ENCODE measurements at regions of chr16 and their contacts with region 1.

Region 1: GRCh38 chr16:19086322-19087199 is 19.1 kb downstream of the COQ7 start:
- DNase-seq: peak; percentile 88 to 92 (median 91)
- H3K4me3 ChIP-seq: peak overlapping the region in 2 of 3 experiments; percentile 10 to 67
- H3K4me3 Mint-ChIP-seq: peak overlapping the region; percentile 75 to 87
- H3K27ac ChIP-seq: no peak overlapping the region
- H3K27ac Mint-ChIP-seq: peak overlapping the region; percentile 46 to 89 (median 77)
- H3K4me1 ChIP-seq: peaks cover 14% of the 10 kb centered on the region in 2 donors
- H3K4me1 Mint-ChIP-seq: peaks cover 13% of the 10 kb centered on the region
- H3K27me3 ChIP-seq: peaks cover 0 to 19% of the 10 kb centered on the region in 2 donors
- H3K27me3 Mint-ChIP-seq: peaks cover 14 to 18% (median 18%) of the 10 kb centered on the region in 3 donors
- CTCF ChIP-seq: peak; percentile 95

Region 2: GRCh38 chr16:19118938-19119431 is 32.4 kb after region 1 on chr16:
- intact Hi-C with region 1: no loop called
- DNase-seq: peak; percentile 82 to 92 (median 90)
- H3K4me3 ChIP-seq: peak overlapping the region; percentile 41 to 78 (median 53)
- H3K4me3 Mint-ChIP-seq: peak overlapping the region; percentile 77 to 90
- H3K27ac ChIP-seq: peak overlapping the region; percentile 81 to 94
- H3K27ac Mint-ChIP-seq: peak overlapping the region; percentile 90 to 98 (median 94)
- H3K4me1 ChIP-seq: peaks cover 64 to 72% of the 10 kb centered on the region in 2 donors
- H3K4me1 Mint-ChIP-seq: peaks cover 59% of the 10 kb centered on the region
- H3K27me3 ChIP-seq: no peaks in the 10 kb centered on the region
- H3K27me3 Mint-ChIP-seq: no peaks in the 10 kb centered on the region
- CTCF ChIP-seq: no peak

Region 3: GRCh38 chr16:19167710-19168370 is 81.3 kb after region 1 on chr16 and contains the start of gene SYT17:
- intact Hi-C with region 1: loop called in 1 of 2 experiments (anchors 5 kb)
- DNase-seq: peak; percentile 71 to 79 (median 76)
- H3K4me3 ChIP-seq: peak within 1 kb of the TSS; percentile 30 to 76 (median 46)
- H3K4me3 Mint-ChIP-seq: peak within 1 kb of the TSS; percentile 77 to 86
- H3K27ac ChIP-seq: no peak within 1 kb of the TSS
- H3K27ac Mint-ChIP-seq: no peak within 1 kb of the TSS
- H3K4me1 ChIP-seq: peaks cover 20 to 30% of the 10 kb centered on the region in 2 donors
- H3K4me1 Mint-ChIP-seq: peaks cover 19% of the 10 kb centered on the region
- H3K27me3 ChIP-seq: peaks cover 18 to 38% of the 10 kb centered on the region in 2 donors
- H3K27me3 Mint-ChIP-seq: peaks cover 36 to 50% (median 48%) of the 10 kb centered on the region in 3 donors
- CTCF ChIP-seq: peak; percentile 92
- polyA plus RNA-seq, gene SYT17: 0.81 to 4.9 (median 1.1) TPM

Region 4: DNA sequence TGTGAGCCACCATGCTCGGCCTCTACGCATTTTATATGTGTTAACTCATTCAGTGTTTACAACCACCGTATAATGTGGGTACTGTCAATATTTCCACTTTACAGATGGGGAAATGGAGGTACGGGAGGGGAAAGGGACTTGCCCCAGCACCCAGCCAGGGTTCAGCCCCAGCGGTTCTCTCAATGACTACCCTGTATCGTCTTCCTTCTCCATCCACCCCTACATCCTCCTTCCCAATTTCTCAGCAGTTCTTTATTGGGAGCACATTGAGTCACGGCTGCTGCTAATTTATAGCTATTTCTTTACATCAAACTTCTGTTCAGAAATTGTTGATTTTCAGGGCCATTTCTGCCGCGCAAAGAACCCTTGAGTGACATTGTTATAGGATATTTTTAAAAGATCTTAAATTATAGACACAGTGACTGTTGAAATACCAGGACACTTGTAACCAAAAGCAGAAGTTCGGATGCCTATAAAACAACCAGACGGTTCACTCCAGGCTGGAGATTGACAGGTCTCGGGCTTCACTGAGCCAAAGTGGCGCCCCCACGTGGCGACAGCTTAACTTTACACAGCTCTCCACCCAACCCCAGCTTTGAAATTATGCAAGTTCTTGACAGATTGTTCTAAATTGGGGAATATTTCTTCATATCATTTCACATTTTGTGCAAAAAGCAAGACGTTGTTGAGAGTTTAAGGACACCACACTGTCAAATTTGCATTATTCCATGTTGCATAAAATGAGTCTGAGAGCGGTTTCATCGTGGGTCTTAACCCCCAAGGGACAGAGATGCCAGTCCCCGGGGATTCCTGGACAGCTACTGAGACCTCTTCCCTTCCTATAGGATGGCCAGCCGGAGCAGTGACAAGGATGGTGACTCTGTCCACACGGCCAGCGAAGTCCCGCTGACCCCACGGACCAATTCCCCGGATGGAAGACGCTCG is 93.3 kb after region 1 on chr16:
- intact Hi-C with region 1: loop called in 1 of 2 experiments (anchors 5 kb)
- DNase-seq: peak; percentile 87 to 91 (median 90)
- H3K4me3 ChIP-seq: peak overlapping the region in 1 of 3 experiments; percentile 38
- H3K4me3 Mint-ChIP-seq: no peak overlapping the region
- H3K27ac ChIP-seq: peak overlapping the region; percentile 49 to 74
- H3K27ac Mint-ChIP-seq: peak overlapping the region; percentile 61 to 94 (median 89)
- H3K4me1 ChIP-seq: peaks cover 56% of the 10 kb centered on the region in 2 donors
- H3K4me1 Mint-ChIP-seq: peaks cover 52% of the 10 kb centered on the region
- H3K27me3 ChIP-seq: no peaks in the 10 kb centered on the region
- H3K27me3 Mint-ChIP-seq: peaks cover 0 to 5% (median 0%) of the 10 kb centered on the region in 3 donors
- CTCF ChIP-seq: peak; percentile 92

Region 5: DNA sequence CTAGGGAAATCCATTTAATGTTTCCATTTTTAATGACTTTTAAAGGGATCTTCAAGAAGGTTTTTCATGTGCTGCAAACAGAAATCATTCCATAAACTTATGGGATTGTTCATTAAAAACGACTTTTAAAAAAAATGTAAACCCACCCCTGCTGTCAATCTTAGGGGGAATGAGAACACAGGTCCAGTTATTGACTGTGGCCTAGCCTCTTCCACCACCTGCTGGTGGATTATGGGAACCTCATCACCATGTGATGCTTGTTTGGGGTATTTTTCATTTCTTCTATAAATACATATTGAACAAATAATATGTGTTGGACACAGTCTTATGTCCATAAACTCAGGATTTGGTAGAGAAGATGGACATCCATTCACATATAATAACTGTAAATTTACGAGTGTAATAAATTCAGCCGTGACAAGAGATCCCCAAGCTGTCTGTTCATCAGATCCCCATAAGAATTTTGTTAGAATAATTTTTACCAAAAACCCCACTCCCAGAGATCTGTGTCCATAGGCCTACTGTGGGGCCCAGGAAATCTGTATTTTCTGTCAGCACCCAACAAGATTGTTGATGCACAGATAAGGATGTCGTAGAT is 289.1 kb after region 1 on chr16:
- intact Hi-C with region 1: loop called (anchors 1 to 2 kb)
- DNase-seq: peak; percentile 32 to 55 (median 52)
- H3K4me3 ChIP-seq: no peak overlapping the region
- H3K4me3 Mint-ChIP-seq: no peak overlapping the region
- H3K27ac ChIP-seq: no peak overlapping the region
- H3K27ac Mint-ChIP-seq: no peak overlapping the region
- H3K4me1 ChIP-seq: no peaks in the 10 kb centered on the region
- H3K4me1 Mint-ChIP-seq: no peaks in the 10 kb centered on the region
- H3K27me3 ChIP-seq: no peaks in the 10 kb centered on the region
- H3K27me3 Mint-ChIP-seq: peaks cover 0 to 8% (median 6%) of the 10 kb centered on the region in 3 donors
- CTCF ChIP-seq: peak; percentile 95

Region 6: DNA sequence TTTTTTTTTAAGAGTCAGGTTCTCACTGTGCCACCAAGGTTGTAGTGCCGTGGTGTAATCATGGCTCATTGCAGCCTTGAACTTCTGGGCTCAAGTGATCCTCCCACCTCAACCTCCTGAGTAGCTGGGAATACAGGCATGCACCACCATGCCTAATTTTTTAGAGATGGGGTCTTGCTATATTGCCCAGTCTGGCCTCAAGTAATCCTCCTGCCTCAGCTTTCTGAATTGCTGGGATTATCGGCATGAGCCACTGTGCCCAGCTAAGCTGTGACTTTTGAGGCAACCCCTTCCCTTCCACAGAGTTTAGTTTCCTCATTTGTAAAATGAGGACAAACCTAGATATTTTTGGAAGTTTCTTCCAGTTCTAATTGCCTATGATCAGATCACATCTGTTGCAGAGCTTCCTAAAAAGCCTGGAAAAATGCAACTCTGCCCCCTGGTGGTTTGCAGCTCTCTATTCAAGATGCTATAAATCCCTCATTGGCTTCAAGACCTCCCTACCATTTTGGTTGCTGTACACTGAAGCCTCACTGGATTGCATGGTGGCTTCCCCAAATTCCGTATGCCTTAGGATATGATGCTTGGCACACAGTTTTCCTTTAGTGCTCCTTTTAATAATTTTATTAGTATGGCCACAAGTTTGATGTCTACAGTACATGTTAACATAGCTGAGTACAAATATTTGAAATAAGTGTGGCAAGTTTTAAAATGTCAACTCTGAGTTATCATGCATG is 416.0 kb after region 1 on chr16:
- intact Hi-C with region 1: loop called (anchors 5 kb)
- DNase-seq: peak; percentile 60 to 66 (median 65)
- H3K4me3 ChIP-seq: no peak overlapping the region
- H3K4me3 Mint-ChIP-seq: no peak overlapping the region
- H3K27ac ChIP-seq: no peak overlapping the region
- H3K27ac Mint-ChIP-seq: no peak overlapping the region
- H3K4me1 ChIP-seq: peaks cover 6% of the 10 kb centered on the region in 2 donors
- H3K4me1 Mint-ChIP-seq: peaks cover 5% of the 10 kb centered on the region
- H3K27me3 ChIP-seq: no peaks in the 10 kb centered on the region
- H3K27me3 Mint-ChIP-seq: peaks cover 0 to 2% (median 0%) of the 10 kb centered on the region in 3 donors
- CTCF ChIP-seq: peak; percentile 84

Region 7: DNA sequence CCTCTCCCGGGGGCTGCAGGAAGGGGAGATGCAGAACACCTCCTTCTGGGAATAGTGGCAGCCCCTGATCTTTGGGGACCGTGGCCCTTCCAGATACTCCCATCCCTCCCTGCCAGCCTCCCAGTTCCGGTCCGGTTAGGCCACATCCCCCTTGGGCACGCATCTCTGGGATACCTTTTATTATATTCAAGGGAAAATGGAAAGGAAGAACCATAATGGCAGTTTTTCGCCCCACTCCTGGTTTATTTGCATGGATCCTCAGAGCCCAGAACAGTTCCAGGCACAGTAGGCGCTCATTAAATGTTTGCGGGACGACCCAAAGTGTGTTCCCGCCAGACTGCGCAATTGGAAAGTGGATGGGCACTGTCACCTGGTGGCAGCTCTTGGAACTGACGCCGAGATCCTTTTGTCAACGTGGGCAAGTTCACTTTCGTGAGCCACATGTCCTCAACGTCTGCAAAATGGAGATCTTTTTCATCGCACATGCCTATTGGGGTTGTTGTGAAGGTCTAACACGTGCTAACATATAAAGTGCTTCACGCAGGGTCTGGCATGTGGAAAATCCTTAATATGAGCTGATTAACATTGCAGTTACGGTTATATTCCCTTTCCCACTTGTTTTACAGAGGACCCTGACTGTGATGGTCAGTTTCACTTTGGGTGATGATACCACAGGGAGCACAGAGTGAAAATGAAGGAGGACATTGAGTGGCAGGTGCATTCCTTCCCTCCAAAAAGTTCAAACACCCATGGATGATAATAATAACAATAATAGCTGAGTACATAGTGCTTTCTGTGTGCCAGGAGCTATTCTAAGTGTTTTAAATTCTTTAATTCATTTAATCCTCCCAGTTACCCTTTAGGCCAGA is 799.7 kb after region 1 on chr16:
- intact Hi-C with region 1: loop called in 1 of 2 experiments (anchors 10 kb)
- DNase-seq: peak; percentile 51 to 64 (median 57)
- H3K4me3 ChIP-seq: peak overlapping the region in 1 of 3 experiments; percentile 78
- H3K4me3 Mint-ChIP-seq: peak overlapping the region; percentile 64 to 94
- H3K27ac ChIP-seq: no peak overlapping the region
- H3K27ac Mint-ChIP-seq: no peak overlapping the region
- H3K4me1 ChIP-seq: peaks cover 22 to 31% of the 10 kb centered on the region in 2 donors
- H3K4me1 Mint-ChIP-seq: peaks cover 22% of the 10 kb centered on the region
- H3K27me3 ChIP-seq: peaks cover 34 to 47% of the 10 kb centered on the region in 2 donors
- H3K27me3 Mint-ChIP-seq: peaks cover 45 to 49% (median 49%) of the 10 kb centered on the region in 3 donors
- CTCF ChIP-seq: peak; percentile 99

Measured in CD14-positive monocyte (primary cell).